Dendritic cell treated with granulocyte-macrophage colony-stimulating factor and Interleukin-4, amounts not matched to agents 40 ng/mL and 50 ng/mL, for 4 days (primary cell): ENCODE measurements at regions of chr1 and their contacts with region 1.

Region 1: GRCh38 chr1:160570840-160571239 is 8.5 kb downstream of the CD84 start:
- H3K4me3 Mint-ChIP-seq: peak overlapping the region; percentile 40
- H3K27ac Mint-ChIP-seq: peak overlapping the region; percentile 61
- H3K4me1 Mint-ChIP-seq: peaks cover 100% of the 10 kb centered on the region
- H3K27me3 Mint-ChIP-seq: no peaks in the 10 kb centered on the region

Region 2: GRCh38 chr1:160546942-160547341 is 23.9 kb before region 1 on chr1:
- intact Hi-C with region 1: loop called (anchors 2 kb)
- H3K4me3 Mint-ChIP-seq: peak overlapping the region; percentile 47
- H3K27ac Mint-ChIP-seq: peak overlapping the region; percentile 77
- H3K4me1 Mint-ChIP-seq: peaks cover 79% of the 10 kb centered on the region
- H3K27me3 Mint-ChIP-seq: no peaks in the 10 kb centered on the region

Region 3: GRCh38 chr1:160681067-160681890 is 110.4 kb after region 1 on chr1:
- intact Hi-C with region 1: no loop called
- H3K4me3 Mint-ChIP-seq: no peak overlapping the region
- H3K27ac Mint-ChIP-seq: peak overlapping the region; percentile 65
- H3K4me1 Mint-ChIP-seq: peaks cover 67% of the 10 kb centered on the region
- H3K27me3 Mint-ChIP-seq: no peaks in the 10 kb centered on the region